Psoas muscle (tissue), 8 donors: ENCODE measurements at regions of chr4 and their contacts with region 1.

Region 1: GRCh38 chr4:27338530-27338929 is 477.9 kb downstream of the STIM2 start:
- DNase-seq: no peak
- ATAC-seq: no peak
- H3K4me3 ChIP-seq: no peak overlapping the region
- H3K27ac ChIP-seq: no peak overlapping the region
- H3K4me1 ChIP-seq: no peaks in the 10 kb centered on the region
- H3K27me3 ChIP-seq: no peaks in the 10 kb centered on the region
- CTCF ChIP-seq: no peak

Region 2: GRCh38 chr4:27100719-27101515 is 237.6 kb before region 1 on chr4:
- intact Hi-C with region 1: no loop called
- DNase-seq: no peak
- ATAC-seq: no peak
- H3K4me3 ChIP-seq: no peak overlapping the region
- H3K27ac ChIP-seq: no peak overlapping the region
- H3K4me1 ChIP-seq: no peaks in the 10 kb centered on the region
- H3K27me3 ChIP-seq: peaks cover 0 to 2% (median 0%) of the 10 kb centered on the region in 3 donors
- CTCF ChIP-seq: no peak

Region 3: GRCh38 chr4:29295280-29295679 is 1956.8 kb after region 1 on chr4:
- intact Hi-C with region 1: loop called in 1 of 2 experiments (anchors 5 kb)
- DNase-seq: no peak
- ATAC-seq: no peak
- H3K4me3 ChIP-seq: no peak overlapping the region
- H3K27ac ChIP-seq: no peak overlapping the region
- H3K4me1 ChIP-seq: no peaks in the 10 kb centered on the region
- H3K27me3 ChIP-seq: no peaks in the 10 kb centered on the region
- CTCF ChIP-seq: no peak